Adrenal gland (tissue), 19 donors: ENCODE measurements at regions of chr21 and their contacts with region 1.

Region 1: GRCh38 chr21:45596704-45597318 is 46.7 kb upstream of the PCBP3 start:
- DNase-seq: peak; percentile 68 to 90 (median 80)
- H3K4me3 ChIP-seq: no peak overlapping the region
- H3K27ac ChIP-seq: no peak overlapping the region
- H3K4me1 ChIP-seq: no peaks in the 10 kb centered on the region
- H3K27me3 ChIP-seq: no peaks in the 10 kb centered on the region
- CTCF ChIP-seq: peak; percentile 76 to 93 (median 86)
- POLR2A ChIP-seq: no peak

Region 2: DNA sequence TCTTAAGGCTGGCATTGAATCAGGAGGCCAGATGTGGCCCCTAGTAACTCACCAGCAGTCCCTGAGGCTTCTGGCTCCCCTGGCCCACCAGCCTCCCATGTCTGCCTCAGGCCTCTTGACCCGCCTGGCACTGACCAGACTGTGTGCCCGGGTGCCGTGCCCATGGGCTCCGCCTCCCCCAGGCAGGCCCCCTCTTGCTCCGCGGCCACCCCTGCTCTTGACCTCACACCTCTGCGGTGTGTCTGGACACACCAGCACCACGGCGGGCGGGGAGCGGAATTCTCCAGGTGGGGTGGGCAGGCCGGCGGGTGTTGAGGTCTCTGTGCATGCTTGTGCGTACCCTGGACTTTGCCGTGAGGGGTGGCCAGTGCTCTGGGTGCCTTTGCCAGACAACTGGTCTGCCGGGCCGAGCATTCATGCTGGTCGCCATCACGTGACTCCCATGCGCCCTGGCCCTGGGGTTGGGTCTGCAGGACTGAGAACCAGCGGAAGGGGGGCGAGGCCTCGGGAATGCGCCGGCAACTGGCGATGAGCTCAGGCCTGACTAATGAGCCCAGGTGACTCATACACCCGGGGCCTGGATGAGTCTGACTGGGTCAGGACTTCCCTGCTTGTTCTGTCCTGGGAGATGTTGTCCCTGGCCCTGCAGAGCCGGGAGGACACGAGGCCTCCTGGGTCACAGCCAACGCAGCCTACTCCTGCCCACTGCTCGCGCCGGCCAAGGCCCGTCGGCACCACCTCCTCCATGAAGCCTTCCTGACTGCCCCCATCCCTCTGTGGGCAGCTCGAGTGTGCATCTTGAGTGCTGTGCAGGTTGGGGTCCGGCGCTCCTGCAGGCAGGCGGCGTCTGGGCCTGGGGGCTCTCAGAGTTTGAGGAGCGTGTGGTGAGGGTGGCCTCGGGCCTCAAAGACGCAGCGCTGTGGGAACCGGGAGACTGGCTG is 169.2 kb before region 1 on chr21:
- intact Hi-C with region 1: no loop called
- DNase-seq: peak; percentile 93 to 99 (median 98)
- H3K4me3 ChIP-seq: no peak overlapping the region
- H3K27ac ChIP-seq: peak overlapping the region; percentile 43 to 95 (median 83)
- H3K4me1 ChIP-seq: peaks cover 20 to 34% of the 10 kb centered on the region in 2 donors
- H3K27me3 ChIP-seq: no peaks in the 10 kb centered on the region
- CTCF ChIP-seq: peak in 1 of 6 experiments; percentile 2
- POLR2A ChIP-seq: peak in 1 of 2 donors; percentile 34

Region 3: DNA sequence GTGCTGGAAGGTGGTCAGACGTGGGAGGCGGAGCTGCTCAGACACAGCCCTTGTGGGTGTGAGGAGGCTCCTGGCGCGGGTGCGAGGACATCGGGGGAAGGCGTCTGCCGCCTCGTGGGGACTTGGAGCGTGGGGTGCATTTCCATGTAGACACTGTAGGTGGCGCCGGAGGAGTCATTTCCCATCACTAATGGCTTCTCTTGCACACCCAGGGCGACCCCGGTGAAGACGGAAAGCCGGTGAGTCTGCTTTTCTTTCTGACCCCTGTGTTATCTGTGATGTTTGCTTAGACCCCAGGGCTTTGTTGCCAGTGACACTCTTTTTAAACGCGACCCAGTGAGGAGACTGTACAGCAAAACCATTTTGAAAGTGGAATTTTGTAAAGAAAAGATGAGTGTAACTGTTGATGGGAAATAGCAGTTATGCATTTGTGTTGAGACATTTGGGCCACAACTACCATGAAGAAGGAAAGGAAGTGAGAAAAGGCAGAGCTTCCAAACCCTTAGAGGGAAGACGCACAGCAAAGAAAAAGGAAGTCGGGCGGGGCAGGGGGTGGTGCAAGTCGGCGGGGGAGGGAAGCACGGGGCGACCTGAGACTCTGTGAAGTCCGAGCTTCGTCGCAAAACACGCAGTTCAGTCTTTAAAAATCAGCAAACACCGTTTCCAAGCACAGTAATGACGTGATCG is 118.6 kb before region 1 on chr21:
- intact Hi-C with region 1: loop called in 1 of 2 experiments (anchors 10 kb)
- DNase-seq: peak; percentile 51 to 88 (median 68)
- H3K4me3 ChIP-seq: peak overlapping the region in 1 of 4 donors; percentile 13
- H3K27ac ChIP-seq: peak overlapping the region in 2 of 5 donors; percentile 68 to 78
- H3K4me1 ChIP-seq: peaks cover 0 to 7% of the 10 kb centered on the region in 2 donors
- H3K27me3 ChIP-seq: no peaks in the 10 kb centered on the region
- CTCF ChIP-seq: peak; percentile 66 to 85 (median 83)
- POLR2A ChIP-seq: no peak

Region 4: GRCh38 chr21:45525153-45526025 is 71.4 kb before region 1 on chr21:
- intact Hi-C with region 1: no loop called
- DNase-seq: peak; percentile 81 to 95 (median 93)
- H3K4me3 ChIP-seq: no peak overlapping the region
- H3K27ac ChIP-seq: peak overlapping the region in 4 of 5 donors; percentile 36 to 87 (median 56)
- H3K4me1 ChIP-seq: peaks cover 4 to 9% of the 10 kb centered on the region in 2 donors
- H3K27me3 ChIP-seq: no peaks in the 10 kb centered on the region
- CTCF ChIP-seq: peak in 1 of 6 experiments; percentile 2
- POLR2A ChIP-seq: peak in 1 of 2 donors; percentile 41

Region 5: GRCh38 chr21:45542242-45542666 is 54.6 kb before region 1 on chr21 and contains the start of gene SLC19A1:
- intact Hi-C with region 1: no loop called
- DNase-seq: peak; percentile 45 to 77 (median 62)
- H3K4me3 ChIP-seq: peak within 1 kb of the TSS in 3 of 4 donors; percentile 40 to 94 (median 53)
- H3K27ac ChIP-seq: peak within 1 kb of the TSS in 2 of 5 donors; percentile 47 to 80
- H3K4me1 ChIP-seq: peaks cover 7 to 13% of the 10 kb centered on the region in 2 donors
- H3K27me3 ChIP-seq: no peaks in the 10 kb centered on the region
- CTCF ChIP-seq: peak in 3 of 6 experiments; percentile 47 to 69 (median 62)
- POLR2A ChIP-seq: peak in 1 of 2 donors; percentile 22
- total RNA-seq, gene SLC19A1: 2.5 to 21.2 (median 17.9) TPM

Region 6: GRCh38 chr21:45554477-45555175 is 42.2 kb before region 1 on chr21:
- intact Hi-C with region 1: loop called (anchors 2 to 5 kb)
- DNase-seq: peak; percentile 75 to 95 (median 85)
- H3K4me3 ChIP-seq: peak overlapping the region in 3 of 4 donors; percentile 26 to 68 (median 37)
- H3K27ac ChIP-seq: peak overlapping the region in 4 of 5 donors; percentile 57 to 88 (median 76)
- H3K4me1 ChIP-seq: peaks cover 0 to 8% of the 10 kb centered on the region in 2 donors
- H3K27me3 ChIP-seq: no peaks in the 10 kb centered on the region
- CTCF ChIP-seq: peak; percentile 54 to 97 (median 82)
- POLR2A ChIP-seq: peak in 1 of 2 donors; percentile 41

Region 7: DNA sequence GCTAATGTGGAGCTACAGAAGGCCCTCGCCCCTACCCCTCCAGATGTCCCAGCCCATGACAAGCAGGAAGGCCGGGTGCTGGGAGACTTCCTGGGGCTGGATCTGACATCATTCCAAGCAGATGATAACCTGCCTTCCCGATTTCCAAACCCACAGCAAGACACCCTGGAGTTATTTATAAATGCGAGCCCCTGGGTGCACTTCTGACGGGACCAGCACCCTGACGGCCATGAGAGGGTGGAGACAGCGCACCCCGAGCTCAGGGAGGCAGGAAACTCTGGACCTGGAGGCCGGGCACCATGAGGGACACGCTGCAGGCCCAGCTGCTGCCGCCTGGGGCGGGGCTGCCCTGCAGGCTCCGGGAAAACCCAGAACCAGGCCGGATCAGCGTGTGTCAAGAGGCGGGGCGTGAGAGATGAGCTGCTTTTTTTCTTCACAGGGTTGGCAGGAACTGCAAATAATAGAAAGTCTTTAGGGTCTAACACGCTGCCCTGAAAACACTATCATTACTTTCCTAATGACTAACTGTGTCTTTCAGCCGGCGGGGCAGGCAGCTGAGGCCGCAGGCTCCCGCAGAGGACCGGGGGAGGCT is 44.2 kb after region 1 on chr21:
- intact Hi-C with region 1: no loop called
- DNase-seq: peak in 5 of 7 donors; percentile 34 to 80 (median 45)
- H3K4me3 ChIP-seq: no peak overlapping the region
- H3K27ac ChIP-seq: peak overlapping the region in 2 of 5 donors; percentile 61 to 66
- H3K4me1 ChIP-seq: peaks cover 6 to 8% of the 10 kb centered on the region in 2 donors
- H3K27me3 ChIP-seq: no peaks in the 10 kb centered on the region
- CTCF ChIP-seq: peak in 1 of 6 experiments; percentile 22
- POLR2A ChIP-seq: no peak